Activated CD8-positive, alpha-beta T cell treated with anti-CD3 and anti-CD28 coated beads, Interleukin-2, amount 10 ng/mL, durations not matched to agents 7 days and 5 days (primary cell): ENCODE measurements at regions of chr1 and their contacts with region 1.

Region 1: DNA sequence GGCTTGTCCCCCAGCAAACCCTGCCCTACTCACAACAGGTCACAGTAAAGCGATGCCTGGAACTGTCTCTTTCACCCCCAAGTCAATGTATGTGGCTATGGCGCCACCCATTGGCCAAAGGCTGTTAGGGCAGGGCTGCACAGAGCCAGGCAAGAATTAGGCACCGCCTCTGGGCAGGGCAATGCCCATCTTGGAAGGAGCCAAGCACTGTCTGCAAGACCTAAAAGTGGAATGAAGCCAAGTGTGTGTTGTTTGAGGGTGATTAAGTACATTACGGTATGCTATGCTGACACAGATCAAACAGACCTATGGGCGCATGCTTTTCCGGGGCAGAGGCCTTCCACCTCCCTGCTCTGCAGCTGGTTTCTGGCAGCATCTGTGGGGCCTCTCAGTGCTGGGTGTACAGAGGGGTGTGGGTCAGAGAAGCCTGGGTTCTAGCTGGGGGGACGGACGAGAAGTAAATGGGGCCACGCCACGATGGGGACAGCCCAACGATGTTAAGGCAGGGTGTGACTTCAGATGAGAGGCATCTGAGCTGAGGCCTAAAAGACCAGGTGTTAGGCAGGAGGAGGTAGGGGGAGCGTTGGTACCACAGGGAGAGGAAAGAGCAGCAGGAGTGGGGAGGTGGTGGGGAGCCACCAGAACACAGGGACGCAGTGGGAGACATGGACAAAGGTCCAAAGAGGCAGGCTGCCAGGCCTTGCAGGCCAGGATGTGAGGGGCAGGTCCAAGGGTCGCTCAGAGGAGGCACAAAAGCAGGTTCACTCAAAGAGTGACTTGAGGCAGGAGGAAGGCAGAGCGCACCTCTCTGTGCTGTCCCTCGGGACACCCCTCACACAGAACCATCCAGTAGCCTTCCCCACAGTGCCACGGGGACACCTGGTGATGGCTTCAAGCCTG is 49.8 kb downstream of the ACOT7 start:
- DNase-seq: peak; percentile 75
- ATAC-seq: peak; percentile 52
- H3K4me3 Mint-ChIP-seq: no peak overlapping the region
- H3K27ac Mint-ChIP-seq: no peak overlapping the region
- H3K4me1 Mint-ChIP-seq: peaks cover 19% of the 10 kb centered on the region
- H3K27me3 Mint-ChIP-seq: no peaks in the 10 kb centered on the region

Region 2: DNA sequence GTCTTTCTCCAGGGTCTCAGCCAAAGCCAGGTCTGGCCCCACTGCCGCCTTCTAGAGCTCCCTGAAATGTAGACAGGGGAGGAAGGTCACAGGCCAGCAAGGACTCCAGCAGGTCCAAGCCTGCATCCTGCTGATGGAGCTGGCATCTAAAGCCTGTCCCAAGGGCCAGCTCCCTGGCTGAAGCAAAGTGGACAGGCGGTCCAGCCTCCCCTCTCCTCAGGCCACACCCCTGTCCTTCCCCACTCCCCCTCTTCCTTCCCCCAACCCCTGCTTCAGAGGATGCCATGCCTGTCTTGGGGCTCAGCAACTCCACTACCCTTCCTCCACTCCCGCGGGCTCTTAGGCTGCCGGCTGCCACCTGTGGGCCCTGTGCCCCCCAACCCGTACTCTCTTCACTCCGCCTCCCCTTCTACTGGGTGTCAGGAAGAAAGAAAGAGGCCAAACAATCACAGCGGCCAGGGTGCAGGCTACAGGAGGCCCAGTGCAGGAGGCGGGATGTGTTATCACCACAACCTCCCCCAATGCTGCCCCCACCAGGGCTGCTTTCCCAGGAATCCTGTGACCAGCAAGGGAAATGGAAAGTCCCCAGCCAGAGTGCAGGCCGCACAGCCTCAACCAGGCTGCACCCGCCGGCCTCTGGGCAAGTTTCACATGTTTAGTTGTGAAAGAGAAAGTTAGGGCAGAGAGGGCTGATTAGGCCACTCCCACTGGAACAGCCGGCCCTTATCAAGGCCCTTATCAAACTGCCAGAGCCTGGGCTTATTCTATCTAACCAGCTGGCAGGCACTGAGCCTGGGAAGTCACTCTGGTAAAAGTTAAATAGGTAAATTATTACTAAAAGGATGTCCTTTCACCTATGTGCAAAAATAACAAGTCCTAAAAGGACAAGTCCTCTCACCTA is 15.7 kb after region 1 on chr1:
- CTCF ChIA-PET with region 1: interaction called, 107 read pairs
- POLR2A ChIA-PET with region 1: interaction called, 48 read pairs
- DNase-seq: peak; percentile 80
- ATAC-seq: peak; percentile 85
- H3K4me3 Mint-ChIP-seq: peak overlapping the region; percentile 74
- H3K27ac Mint-ChIP-seq: peak overlapping the region; percentile 91
- H3K4me1 Mint-ChIP-seq: peaks cover 58% of the 10 kb centered on the region
- H3K27me3 Mint-ChIP-seq: no peaks in the 10 kb centered on the region

Region 3: GRCh38 chr1:6393400-6394187 is 49.8 kb after region 1 on chr1 and contains the start of gene ACOT7:
- CTCF ChIA-PET with region 1: interaction called, 39 read pairs
- POLR2A ChIA-PET with region 1: interaction called, 13 read pairs
- DNase-seq: peak; percentile 93
- ATAC-seq: peak; percentile 87
- H3K4me3 Mint-ChIP-seq: peak within 1 kb of the TSS; percentile 82
- H3K27ac Mint-ChIP-seq: peak within 1 kb of the TSS; percentile 96
- H3K4me1 Mint-ChIP-seq: peaks cover 43% of the 10 kb centered on the region
- H3K27me3 Mint-ChIP-seq: peaks cover 3% of the 10 kb centered on the region
- total RNA-seq, gene ACOT7: 97.0 to 102 TPM

Region 4: DNA sequence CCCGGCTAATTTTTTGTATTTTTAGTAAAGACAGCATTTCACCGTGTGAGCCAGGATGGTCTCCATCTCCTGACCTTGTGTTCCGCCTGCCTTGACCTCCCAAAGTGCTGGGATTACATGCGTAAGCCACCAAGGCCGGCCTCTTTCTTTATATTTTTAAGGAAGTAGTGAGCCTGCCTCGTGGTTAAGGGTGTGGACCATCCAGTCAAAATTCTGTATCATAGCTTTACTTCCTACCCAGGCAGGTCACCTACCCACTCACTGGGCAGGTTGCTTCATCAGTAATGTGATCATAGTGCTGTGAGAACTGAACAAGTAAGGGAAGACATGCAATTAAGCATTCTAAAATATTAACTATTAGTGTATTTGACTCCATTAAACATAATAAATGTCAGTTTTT is 57.9 kb after region 1 on chr1:
- CTCF ChIA-PET with region 1: interaction called, 47 read pairs
- POLR2A ChIA-PET with region 1: interaction called, 5 read pairs
- DNase-seq: no peak
- ATAC-seq: no peak
- H3K4me3 Mint-ChIP-seq: no peak overlapping the region
- H3K27ac Mint-ChIP-seq: no peak overlapping the region
- H3K4me1 Mint-ChIP-seq: peaks cover 12% of the 10 kb centered on the region
- H3K27me3 Mint-ChIP-seq: peaks cover 5% of the 10 kb centered on the region

Region 5: DNA sequence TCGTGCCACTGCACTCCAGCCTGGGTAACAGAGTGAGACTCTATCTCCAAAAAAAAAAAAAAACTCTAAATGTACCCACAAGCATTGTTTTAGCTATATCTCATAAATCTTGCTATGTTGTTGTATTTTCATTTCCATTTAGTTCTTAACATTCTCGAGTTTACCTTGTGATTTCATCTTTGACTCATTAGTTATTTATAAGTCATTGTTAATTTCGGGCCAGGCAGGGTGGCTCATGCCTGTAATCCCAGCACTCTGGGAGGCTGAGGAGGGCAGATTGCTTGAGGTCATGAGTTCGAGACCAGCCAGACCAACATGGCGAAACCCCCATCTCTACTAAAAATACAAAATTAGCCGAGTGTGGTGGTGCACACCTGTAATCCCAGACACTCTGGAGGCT is 64.3 kb after region 1 on chr1:
- CTCF ChIA-PET with region 1: interaction called, 47 read pairs
- POLR2A ChIA-PET with region 1: no interaction called
- DNase-seq: no peak
- ATAC-seq: no peak
- H3K4me3 Mint-ChIP-seq: no peak overlapping the region
- H3K27ac Mint-ChIP-seq: no peak overlapping the region
- H3K4me1 Mint-ChIP-seq: peaks cover 6% of the 10 kb centered on the region
- H3K27me3 Mint-ChIP-seq: peaks cover 22% of the 10 kb centered on the region

Region 6: DNA sequence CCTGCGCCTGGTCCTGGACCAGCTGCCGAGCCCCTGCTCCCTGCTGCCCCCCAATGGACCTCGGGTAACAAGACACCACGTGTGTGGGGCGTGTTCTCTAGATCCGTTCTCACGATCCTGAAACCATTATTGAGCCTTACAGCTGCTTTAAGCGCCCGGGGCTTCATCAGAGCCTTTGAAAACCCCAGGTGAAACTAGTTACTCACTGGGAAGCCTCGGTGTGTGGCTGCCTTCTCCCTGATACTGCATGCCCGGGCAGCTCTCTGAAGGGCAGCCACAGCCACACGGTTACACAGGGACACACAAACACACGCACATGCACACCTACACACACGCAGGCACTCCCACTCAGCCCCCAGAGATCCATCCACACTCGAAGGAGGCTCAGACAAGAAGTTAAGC is 70.7 kb after region 1 on chr1:
- CTCF ChIA-PET with region 1: interaction called, 10 read pairs
- POLR2A ChIA-PET with region 1: no interaction called
- DNase-seq: peak; percentile 66
- ATAC-seq: peak; percentile 85
- H3K4me3 Mint-ChIP-seq: no peak overlapping the region
- H3K27ac Mint-ChIP-seq: no peak overlapping the region
- H3K4me1 Mint-ChIP-seq: peaks cover 15% of the 10 kb centered on the region
- H3K27me3 Mint-ChIP-seq: peaks cover 59% of the 10 kb centered on the region

Region 7: GRCh38 chr1:6438047-6438525 is 94.3 kb after region 1 on chr1:
- CTCF ChIA-PET with region 1: interaction called, 30 read pairs
- POLR2A ChIA-PET with region 1: no interaction called
- DNase-seq: peak; percentile 80
- ATAC-seq: peak; percentile 67
- H3K4me3 Mint-ChIP-seq: no peak overlapping the region
- H3K27ac Mint-ChIP-seq: no peak overlapping the region
- H3K4me1 Mint-ChIP-seq: peaks cover 2% of the 10 kb centered on the region
- H3K27me3 Mint-ChIP-seq: peaks cover 24% of the 10 kb centered on the region